ENCODE measurements at regions of chr7 and their contacts with region 1.

Region 1: GRCh38 chr7:229184-229964 is 37.0 kb downstream of the FAM20C start:
- DNase-seq: peak; percentile 71 to 96
- H3K4me3 ChIP-seq: peak overlapping the region in 1 of 2 donors; percentile 33
- H3K27ac ChIP-seq: peak overlapping the region; percentile 92 to 95
- H3K4me1 ChIP-seq: peaks cover 33 to 55% of the 10 kb centered on the region in 2 donors
- H3K27me3 ChIP-seq: no peaks in the 10 kb centered on the region
- CTCF ChIP-seq: no peak

Region 2: DNA sequence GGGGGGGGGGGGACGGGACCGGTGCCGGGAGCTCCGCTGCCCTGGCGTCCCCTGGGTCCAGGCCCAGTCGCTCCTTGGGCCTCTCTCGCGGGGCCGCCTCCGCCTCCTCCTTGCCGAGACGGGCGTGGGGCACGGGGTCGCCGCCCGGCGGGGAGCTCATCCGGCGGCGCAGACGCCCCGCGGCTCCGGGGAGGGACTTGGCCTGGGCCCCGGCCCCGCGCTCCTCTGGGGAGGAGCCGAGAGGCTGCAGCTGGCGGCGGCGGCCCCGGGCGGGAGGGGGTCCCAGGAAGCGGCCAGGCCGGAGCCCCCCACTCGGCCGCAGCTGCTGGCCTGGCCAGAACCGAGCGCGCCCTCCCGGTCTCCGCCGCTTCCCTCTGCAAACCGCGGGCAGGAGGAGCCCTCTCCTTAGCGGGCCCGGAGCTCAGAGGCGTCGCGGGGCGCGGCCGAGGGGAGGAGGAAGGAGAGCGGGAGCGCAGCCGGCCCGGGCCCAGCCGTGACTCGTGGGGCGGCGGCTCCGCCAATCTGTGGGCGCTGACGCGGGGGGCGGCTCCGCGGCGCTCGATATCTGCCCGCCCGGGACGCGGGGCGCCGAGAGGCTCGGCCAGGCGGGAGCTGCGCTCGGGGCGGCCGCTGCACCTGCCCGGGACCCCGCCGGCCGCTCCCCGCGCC is 37.3 kb before region 1 on chr7 and contains the start of gene FAM20C:
- intact Hi-C with region 1: loop called (anchors 1 kb)
- DNase-seq: peak; percentile 25 to 90
- H3K4me3 ChIP-seq: peak within 1 kb of the TSS; percentile 82 to 83
- H3K27ac ChIP-seq: peak within 1 kb of the TSS; percentile 89 to 92
- H3K4me1 ChIP-seq: peaks cover 17 to 26% of the 10 kb centered on the region in 2 donors
- H3K27me3 ChIP-seq: no peaks in the 10 kb centered on the region
- CTCF ChIP-seq: no peak
- total RNA-seq, gene FAM20C: 90.8 TPM

Region 3: DNA sequence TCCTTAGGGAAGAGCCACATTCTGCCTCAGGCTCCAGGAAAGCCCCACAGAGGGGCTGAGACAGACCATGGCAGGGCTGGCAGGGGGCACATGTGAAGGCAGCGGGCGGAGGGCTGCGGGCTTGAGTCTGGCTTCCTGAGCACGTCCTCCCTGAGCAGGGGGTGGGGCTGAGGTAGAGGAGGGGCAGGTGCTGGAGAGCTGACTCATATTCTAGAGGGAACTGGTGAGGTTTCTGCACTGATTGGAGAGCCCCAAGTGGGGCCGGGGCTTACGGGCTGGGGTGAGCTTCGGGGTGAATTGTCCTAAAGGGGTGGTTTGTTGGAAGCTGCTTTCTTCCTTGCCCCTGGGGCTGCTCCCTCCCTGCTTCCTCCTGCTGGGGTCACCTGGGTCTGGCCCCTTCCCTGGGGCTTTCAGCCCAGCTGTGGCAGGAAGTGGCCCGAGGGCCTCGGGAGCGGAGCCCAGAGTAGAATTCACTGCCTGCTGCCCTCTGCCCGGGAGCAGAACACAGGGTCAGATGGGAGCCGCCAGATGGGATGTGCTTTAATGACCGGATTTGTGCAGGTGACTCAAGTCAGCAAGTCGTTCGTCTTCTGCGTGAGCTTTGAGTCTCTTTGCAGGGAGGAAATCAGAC is 11.5 kb after region 1 on chr7:
- intact Hi-C with region 1: no loop called
- DNase-seq: no peak
- H3K4me3 ChIP-seq: no peak overlapping the region
- H3K27ac ChIP-seq: no peak overlapping the region
- H3K4me1 ChIP-seq: peaks cover 3 to 4% of the 10 kb centered on the region in 2 donors
- H3K27me3 ChIP-seq: no peaks in the 10 kb centered on the region
- CTCF ChIP-seq: no peak

Measured in ascending aorta (tissue), 2 donors.